Activated T-helper 1 cell treated with anti-CD3 and anti-CD28 coated beads, Interleukin-12 subunit alpha, Interleukin-12 subunit beta, Interleukin-2, Interleukin-4 antibody, amounts not matched to agents 30 ng/mL and 10 ng/mL and 1 ng/mL, durations not matched to agents 14 hours and 24 hours and 36 hours (primary cell): ENCODE measurements at regions of chr1 and their contacts with region 1.

Region 1: GRCh38 chr1:55071477-55071876 is 32.1 kb downstream of the PCSK9 start:
- DNase-seq: no peak
- H3K4me3 Mint-ChIP-seq: no peak overlapping the region
- H3K27ac Mint-ChIP-seq: no peak overlapping the region
- H3K4me1 Mint-ChIP-seq: peaks cover 21% of the 10 kb centered on the region
- H3K27me3 Mint-ChIP-seq: no peaks in the 10 kb centered on the region

Region 2: DNA sequence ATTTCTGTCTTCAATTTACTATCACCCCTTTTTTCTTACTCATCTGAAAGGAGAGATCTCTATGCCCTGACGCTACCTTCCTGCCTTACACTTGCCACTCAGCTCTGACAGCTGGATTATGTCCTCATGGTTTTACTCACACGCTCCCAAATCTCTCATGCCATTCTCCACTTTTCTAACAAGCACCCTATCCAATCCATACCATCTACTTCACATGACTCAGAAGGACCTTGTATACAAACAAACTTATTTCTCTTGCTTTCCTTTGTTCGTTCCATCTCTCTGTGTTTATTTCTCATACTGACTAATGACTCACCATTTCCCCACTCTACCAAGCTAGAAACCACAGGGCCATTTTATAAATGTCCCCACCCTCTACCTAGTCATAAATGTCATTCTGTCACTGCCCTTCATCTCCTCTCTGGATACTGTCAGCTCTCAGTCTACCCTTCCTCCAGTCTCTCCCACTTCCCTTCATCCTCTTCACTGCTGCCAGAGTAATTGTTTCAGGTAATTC is 56.4 kb after region 1 on chr1:
- intact Hi-C with region 1: loop called (anchors 5 kb)
- DNase-seq: no peak
- H3K4me3 Mint-ChIP-seq: peak overlapping the region; percentile 8
- H3K27ac Mint-ChIP-seq: peak overlapping the region; percentile 69
- H3K4me1 Mint-ChIP-seq: peaks cover 31% of the 10 kb centered on the region
- H3K27me3 Mint-ChIP-seq: no peaks in the 10 kb centered on the region

Region 3: DNA sequence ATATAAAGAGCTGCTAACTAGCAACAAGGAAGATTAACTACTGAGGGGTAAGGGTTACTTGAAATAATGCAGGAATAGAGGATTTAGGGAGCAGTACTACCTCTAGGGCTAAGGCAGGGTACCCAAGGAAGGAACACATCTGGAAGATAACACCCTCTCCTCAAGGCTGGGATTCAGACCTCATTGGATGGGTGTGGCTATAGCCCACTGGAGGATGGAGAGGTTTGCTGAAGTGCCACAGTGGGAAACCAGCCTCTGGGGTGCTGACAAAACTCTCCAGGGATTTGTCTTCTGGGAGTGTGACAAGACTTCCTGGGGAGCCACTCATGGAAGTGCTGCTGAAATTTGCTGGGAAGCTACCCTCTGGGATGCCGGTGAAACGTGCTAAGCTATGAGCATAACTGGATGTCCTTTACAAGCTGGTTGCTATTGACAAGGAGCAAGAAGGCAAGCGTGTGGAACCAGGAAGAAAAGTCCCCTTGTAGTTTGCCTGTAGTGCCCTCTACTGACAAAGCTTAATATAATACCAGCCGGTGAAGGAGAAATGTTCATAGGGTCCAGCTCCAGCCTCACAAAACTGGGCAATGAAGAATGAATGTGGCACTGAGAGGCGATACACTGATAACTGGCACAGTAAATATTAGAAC is 266.4 kb after region 1 on chr1:
- intact Hi-C with region 1: loop called (anchors 5 kb)
- DNase-seq: peak; percentile 2
- H3K4me3 Mint-ChIP-seq: no peak overlapping the region
- H3K27ac Mint-ChIP-seq: no peak overlapping the region
- H3K4me1 Mint-ChIP-seq: peaks cover 6% of the 10 kb centered on the region
- H3K27me3 Mint-ChIP-seq: peaks cover 2% of the 10 kb centered on the region